ENCODE measurements at regions of chr13 and their contacts with region 1.

Region 1: DNA sequence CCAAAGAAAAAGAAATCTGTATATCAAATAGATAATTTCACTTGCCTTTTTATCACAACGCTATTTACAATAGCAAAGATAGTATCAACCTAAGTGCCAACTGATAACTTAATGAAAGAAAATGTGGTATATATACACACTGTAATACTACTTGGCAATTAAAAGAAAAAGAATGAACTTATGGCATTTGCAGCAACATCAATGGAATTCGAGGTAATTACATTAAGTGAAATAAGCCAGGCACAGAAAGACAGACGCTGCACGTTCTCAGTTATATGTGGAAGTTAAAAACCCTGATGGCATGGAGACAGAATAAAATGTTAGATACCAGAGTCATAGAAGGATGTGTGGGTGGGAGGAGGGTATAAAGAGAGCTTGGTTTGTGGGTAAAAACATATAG is 1260.5 kb upstream of the PCDH9 start:
- DNase-seq: no peak
- H3K4me3 ChIP-seq: no peak overlapping the region
- H3K4me3 Mint-ChIP-seq: no peak overlapping the region
- H3K27ac ChIP-seq: no peak overlapping the region
- H3K27ac Mint-ChIP-seq: no peak overlapping the region
- H3K4me1 ChIP-seq: no peaks in the 10 kb centered on the region
- H3K4me1 Mint-ChIP-seq: no peaks in the 10 kb centered on the region
- H3K27me3 ChIP-seq: no peaks in the 10 kb centered on the region
- H3K27me3 Mint-ChIP-seq: no peaks in the 10 kb centered on the region

Region 2: DNA sequence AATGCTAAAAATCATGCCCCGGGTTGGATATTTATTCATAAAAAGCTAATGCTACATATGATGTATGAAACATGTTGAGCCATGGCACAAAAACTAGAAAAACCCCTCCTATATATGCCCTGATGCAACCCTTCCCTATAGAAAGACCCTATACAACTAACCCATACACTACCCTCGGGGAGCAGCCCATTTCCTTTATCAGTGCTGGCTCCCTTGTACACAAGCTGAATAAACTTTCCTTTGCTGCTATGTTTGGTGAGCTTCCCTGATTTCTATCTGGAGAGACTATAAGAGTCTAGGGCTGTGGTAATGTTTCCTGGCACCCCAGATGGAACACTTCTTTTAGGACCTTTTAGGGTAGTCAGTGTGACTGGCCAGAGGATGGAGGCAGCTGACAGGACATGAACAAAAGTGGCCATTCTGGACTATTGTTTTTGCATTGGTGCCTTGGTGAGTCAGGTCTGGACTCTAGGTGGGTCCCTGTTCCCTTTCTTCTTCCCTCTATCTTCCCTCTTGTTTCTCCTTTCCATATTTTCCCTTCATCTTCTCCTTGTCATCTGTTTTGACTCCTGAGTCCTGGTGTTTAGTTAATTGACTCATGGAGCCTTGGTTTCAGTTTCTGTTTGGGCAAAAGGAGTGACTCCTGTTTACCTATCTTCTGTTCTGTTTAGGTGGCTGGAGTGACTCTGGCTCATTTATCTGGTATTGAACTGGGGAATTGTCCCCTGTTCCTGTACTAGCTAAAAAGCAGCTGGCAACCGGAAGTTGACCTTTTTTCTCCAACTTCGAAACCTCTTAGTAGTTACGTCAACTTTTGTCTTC is 61.3 kb after region 1 on chr13:
- CTCF ChIA-PET with region 1: no interaction called
- POLR2A ChIA-PET with region 1: no interaction called
- intact Hi-C with region 1: loop called (anchors 10 kb)
- DNase-seq: no peak
- H3K4me3 ChIP-seq: no peak overlapping the region
- H3K4me3 Mint-ChIP-seq: peak overlapping the region in 2 of 8 donors; percentile 36 to 39
- H3K27ac ChIP-seq: no peak overlapping the region
- H3K27ac Mint-ChIP-seq: no peak overlapping the region
- H3K4me1 ChIP-seq: no peaks in the 10 kb centered on the region
- H3K4me1 Mint-ChIP-seq: no peaks in the 10 kb centered on the region
- H3K27me3 ChIP-seq: no peaks in the 10 kb centered on the region
- H3K27me3 Mint-ChIP-seq: no peaks in the 10 kb centered on the region

Measured in CD4-positive, alpha-beta memory T cell (primary cell).